Breast epithelium (tissue), 4 donors: ENCODE measurements at regions of chr3 and their contacts with region 1.

Region 1: DNA sequence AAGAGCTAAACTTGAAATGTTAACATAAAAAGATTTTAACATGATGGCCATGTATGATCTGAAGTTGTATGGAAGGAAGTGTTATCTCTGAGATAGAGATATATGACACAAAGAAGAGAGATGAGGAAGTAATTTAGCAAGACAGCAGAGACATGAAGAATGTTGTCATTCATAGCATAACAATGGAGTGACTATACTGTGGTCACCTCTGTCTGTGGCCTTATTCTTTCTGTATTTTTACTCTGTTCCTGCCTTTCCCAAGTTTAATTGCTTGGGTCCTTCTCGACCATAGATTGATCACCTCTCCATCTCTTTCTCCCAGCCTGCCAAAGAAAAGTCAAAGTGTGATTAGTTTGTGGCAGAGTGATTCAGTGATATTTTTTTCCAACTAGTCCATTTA is 711.8 kb downstream of the CADM2 start:
- DNase-seq: no peak
- H3K4me3 ChIP-seq: no peak overlapping the region
- H3K27ac ChIP-seq: no peak overlapping the region
- H3K4me1 ChIP-seq: no peaks in the 10 kb centered on the region
- H3K27me3 ChIP-seq: no peaks in the 10 kb centered on the region
- CTCF ChIP-seq: no peak
- POLR2A ChIP-seq: no peak

Region 2: DNA sequence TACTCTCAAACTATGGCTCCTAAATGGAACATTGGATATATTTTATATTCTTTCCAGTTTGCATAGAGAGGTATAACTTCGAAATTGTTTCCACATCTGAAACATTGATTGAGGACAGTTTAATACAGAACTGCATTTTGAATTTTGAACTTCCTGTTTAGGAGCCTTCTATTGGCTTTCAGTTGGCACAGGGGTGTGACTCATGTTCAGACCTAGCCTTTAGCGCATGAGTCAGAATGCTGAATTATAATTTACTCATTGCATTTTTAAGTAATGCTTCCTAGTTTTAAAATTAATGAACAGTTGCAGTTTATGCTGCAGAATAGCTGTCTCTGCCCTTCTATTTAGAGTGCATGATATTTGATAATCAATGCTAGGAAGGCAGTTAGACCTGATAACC is 39.9 kb after region 1 on chr3:
- intact Hi-C with region 1: loop called (anchors 2 kb)
- DNase-seq: no peak
- H3K4me3 ChIP-seq: no peak overlapping the region
- H3K27ac ChIP-seq: no peak overlapping the region
- H3K4me1 ChIP-seq: no peaks in the 10 kb centered on the region
- H3K27me3 ChIP-seq: no peaks in the 10 kb centered on the region
- CTCF ChIP-seq: no peak
- POLR2A ChIP-seq: no peak